ENCODE measurements at regions of chr1 and their contacts with region 1.

Region 1: DNA sequence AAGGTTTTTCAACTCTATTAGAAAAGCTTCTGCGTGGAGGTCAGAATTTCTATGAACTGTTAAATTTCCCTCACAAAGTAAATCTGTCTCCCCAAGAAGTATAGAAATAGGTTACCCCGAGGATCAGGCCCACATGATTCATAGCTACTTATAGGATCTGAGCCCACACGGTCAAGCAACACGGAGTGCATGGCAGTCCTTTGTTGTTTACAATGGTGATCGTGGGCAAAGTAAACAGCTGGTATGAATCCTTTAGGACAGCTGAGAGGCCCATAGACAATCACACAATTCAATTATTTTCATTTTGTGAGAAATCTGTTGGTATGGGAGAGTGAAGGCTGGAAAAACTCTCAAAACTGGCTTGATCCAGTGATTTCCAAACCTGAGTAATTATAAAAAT is 58.9 kb upstream of the RCOR3 start:
- DNase-seq: no peak
- ATAC-seq: no peak
- H3K4me3 ChIP-seq: no peak overlapping the region
- H3K27ac ChIP-seq: no peak overlapping the region
- H3K4me1 ChIP-seq: no peaks in the 10 kb centered on the region
- H3K27me3 ChIP-seq: no peaks in the 10 kb centered on the region
- CTCF ChIP-seq: no peak

Region 2: GRCh38 chr1:210841926-210842625 is 358.2 kb before region 1 on chr1:
- intact Hi-C with region 1: loop called in 1 of 2 experiments (anchors 5 kb)
- DNase-seq: no peak
- ATAC-seq: no peak
- H3K4me3 ChIP-seq: no peak overlapping the region
- H3K27ac ChIP-seq: no peak overlapping the region
- H3K4me1 ChIP-seq: no peaks in the 10 kb centered on the region
- H3K27me3 ChIP-seq: no peaks in the 10 kb centered on the region
- CTCF ChIP-seq: no peak

Region 3: DNA sequence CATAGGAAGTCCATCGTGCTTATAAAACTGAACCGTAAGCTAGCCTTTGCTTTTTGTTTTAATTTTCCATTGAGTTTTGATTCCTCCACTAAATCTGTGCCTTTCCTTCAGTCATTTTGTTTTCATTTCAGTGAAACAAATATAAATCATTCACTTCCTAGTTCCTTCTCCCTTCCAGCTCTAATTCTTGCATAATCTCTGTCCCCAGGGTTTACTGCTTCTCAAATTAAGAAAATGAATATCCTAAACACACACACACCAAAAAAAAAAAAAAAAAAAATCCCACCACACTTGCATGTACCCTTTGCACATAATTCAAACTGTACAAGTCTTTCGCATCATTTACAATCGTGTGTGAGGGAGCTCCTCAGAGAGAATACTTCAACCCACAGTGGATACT is 73.1 kb before region 1 on chr1:
- intact Hi-C with region 1: no loop called
- DNase-seq: no peak
- ATAC-seq: no peak
- H3K4me3 ChIP-seq: no peak overlapping the region
- H3K27ac ChIP-seq: no peak overlapping the region
- H3K4me1 ChIP-seq: no peaks in the 10 kb centered on the region
- H3K27me3 ChIP-seq: peaks cover 0 to 26% (median 2%) of the 10 kb centered on the region in 3 donors
- CTCF ChIP-seq: no peak

Region 4: GRCh38 chr1:211229365-211229759 is 29.1 kb after region 1 on chr1:
- intact Hi-C with region 1: no loop called
- DNase-seq: no peak
- ATAC-seq: no peak
- H3K4me3 ChIP-seq: no peak overlapping the region
- H3K27ac ChIP-seq: no peak overlapping the region
- H3K4me1 ChIP-seq: no peaks in the 10 kb centered on the region
- H3K27me3 ChIP-seq: no peaks in the 10 kb centered on the region
- CTCF ChIP-seq: no peak

Region 5: DNA sequence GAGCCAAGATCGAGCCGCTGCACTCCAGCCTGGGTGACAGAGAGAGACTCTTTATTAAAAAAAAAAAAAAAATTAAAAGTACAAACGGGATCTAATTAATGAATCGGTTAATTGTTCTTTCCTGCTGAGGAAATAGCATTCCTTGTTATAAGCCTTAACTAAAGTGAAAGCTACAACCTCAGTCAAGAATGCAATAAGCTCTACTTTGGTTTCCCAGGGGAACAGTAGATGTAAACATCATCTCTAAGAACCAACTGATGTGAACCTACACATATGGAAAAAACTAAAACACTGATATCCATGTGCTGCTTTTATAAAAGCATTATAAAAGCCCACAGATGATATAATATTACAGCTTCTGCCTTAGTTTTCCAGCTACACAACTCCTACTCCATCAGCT is 588.3 kb after region 1 on chr1:
- intact Hi-C with region 1: no loop called
- DNase-seq: no peak
- ATAC-seq: no peak
- H3K4me3 ChIP-seq: no peak overlapping the region
- H3K27ac ChIP-seq: no peak overlapping the region
- H3K4me1 ChIP-seq: no peaks in the 10 kb centered on the region
- H3K27me3 ChIP-seq: no peaks in the 10 kb centered on the region
- CTCF ChIP-seq: no peak

Region 6: DNA sequence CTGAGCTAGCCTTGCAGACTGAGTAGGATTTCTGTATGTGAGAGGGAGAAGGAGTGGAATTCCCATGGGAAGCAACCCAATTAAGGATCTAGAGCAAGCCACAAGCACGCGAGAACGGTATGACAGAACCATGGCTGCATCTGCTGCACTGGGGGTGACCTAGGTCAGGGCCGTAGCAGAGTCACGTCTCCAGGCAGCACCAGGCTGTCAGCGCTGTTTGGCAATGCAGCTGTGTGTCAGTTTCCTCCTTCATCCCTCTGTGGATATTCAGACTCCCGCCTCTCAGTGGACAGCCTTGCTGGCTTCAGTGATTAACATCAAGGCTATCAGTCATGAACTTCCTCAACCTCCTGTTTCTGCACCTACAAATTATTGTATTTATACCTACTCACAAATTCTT is 966.8 kb after region 1 on chr1:
- intact Hi-C with region 1: no loop called
- DNase-seq: peak; percentile 41 to 75
- ATAC-seq: peak; percentile 68 to 93 (median 88)
- H3K4me3 ChIP-seq: no peak overlapping the region
- H3K27ac ChIP-seq: peak overlapping the region; percentile 31
- H3K4me1 ChIP-seq: peaks cover 19% of the 10 kb centered on the region
- H3K27me3 ChIP-seq: no peaks in the 10 kb centered on the region
- CTCF ChIP-seq: no peak